ENCODE measurements at regions of chr7 and their contacts with region 1.

Region 1: GRCh38 chr7:150903606-150904005 is 51.3 kb downstream of the AOC1 start:
- DNase-seq: no peak

Region 2: DNA sequence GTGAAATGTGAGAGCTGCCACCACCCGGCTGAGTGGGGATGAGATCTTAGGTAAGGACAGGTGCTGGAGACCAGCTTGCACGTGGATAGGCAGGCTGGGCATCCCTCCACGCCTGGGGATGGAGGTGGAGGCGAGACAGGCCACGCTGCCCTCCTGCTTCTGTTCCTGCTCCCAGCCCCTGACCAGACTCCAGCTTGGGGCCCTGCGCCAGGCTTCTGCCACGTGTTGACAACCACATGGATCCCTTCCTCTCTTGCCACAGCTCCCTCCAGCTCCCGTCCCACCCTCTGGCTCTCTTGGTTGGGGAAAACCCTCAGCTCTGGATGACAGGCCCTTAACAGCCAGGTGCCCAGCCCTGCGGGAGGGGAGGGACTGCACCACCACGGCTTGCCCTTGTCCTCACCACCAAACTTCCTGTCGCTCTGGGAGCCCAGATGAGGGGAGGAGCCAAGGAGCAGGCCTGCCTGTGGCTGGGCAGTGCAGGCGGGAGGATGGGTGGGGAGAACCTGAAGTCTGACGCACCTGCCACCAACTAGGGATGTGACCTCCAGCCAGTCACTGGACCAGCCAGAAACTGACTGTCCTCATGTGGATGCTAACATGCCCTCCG is 38.5 kb after region 1 on chr7:
- intact Hi-C with region 1: loop called (anchors 5 kb)
- DNase-seq: peak; percentile 84

Region 3: DNA sequence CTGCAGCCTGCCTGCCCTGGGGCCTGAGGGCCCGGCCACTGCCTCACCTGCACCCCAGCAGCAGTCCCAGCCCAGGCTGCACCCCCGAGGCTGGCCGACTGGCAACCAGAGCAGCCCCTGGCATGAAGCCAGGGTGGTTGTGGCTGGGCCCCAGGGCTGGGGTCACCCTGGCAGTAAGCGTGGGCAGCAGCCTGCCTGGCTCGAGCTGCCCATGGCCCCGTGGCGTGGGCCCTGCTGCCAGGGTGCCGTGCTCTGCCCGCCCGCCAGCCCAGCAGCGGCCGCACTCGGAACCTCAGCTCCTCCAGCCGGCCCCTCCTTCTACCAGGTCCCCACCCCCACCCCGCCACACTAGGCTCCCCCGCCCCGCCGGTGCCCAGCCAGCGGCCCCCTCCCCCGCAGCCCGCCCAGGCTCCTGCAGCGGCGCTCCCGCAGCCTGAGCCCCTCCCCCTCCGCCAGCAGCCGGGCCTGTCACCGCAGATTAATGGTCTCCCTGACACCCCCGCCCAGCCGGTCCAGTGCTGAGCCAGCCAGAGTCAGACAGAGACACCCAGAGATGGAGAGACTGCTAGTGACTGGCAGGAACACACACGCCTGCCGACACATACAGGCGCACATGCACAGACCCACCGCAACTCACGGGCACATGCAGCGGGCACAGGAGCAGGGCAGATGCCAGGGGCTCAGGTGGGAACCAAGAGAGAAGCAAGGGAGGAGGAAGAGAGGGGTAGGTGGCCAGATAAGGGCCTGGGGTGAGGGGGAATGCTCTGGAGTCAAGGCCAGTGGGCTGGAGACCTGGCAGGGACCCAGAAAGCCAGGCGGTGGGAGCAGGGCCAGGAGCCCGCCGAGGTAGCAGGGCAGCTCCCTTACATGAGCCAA is 52.2 kb after region 1 on chr7:
- intact Hi-C with region 1: loop called (anchors 5 kb)
- DNase-seq: no peak

Region 4: GRCh38 chr7:151110941-151111645 is 207.5 kb after region 1 on chr7:
- intact Hi-C with region 1: loop called (anchors 5 kb)
- DNase-seq: peak; percentile 89

Region 5: DNA sequence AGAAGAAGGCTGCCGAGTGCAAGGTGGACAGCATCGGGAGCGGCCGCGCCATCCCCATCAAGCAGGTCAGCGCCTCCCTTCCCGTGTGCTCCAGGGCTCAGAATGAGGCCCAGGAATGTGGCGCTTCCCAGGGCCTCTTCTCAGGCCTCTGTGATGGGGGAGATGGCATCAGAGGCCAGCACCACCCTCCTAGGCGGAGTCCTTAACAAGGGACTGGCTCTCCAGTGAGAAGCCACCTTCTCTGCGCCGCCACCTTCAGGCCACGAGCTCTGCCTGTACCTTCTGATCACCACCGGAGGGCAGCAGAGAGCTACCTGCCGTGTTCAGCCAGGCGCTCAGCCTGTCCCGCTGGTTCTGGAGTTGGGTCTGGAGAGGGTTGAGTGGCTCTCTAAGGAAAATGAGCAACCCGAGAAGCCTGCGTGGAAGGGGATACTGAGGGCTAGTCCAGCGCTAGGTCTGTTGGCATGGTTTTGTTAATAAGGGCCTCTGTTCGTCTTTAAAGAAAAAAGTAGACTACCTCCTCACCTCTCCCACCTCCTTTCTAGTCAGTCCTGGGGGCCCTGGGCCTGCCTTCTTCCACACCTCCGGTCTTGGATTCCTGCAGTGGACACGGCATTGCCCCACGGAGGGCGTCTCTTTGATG is 220.3 kb after region 1 on chr7:
- intact Hi-C with region 1: no loop called
- DNase-seq: peak; percentile 92

Measured in cardiac septum (tissue), 1 donor.